ENCODE measurements at regions of chr2 and their contacts with region 1.

Region 1: GRCh38 chr2:70070541-70071268 is 16.6 kb upstream of the PCBP1 start:
- DNase-seq: peak; percentile 78
- ATAC-seq: peak; percentile 100
- H3K4me3 ChIP-seq: no peak overlapping the region
- H3K27ac ChIP-seq: peak overlapping the region; percentile 67; the same call in 1 of the 2 replicates
- H3K4me1 ChIP-seq: 0 out of 2 replicates have a peak, but pooled peaks cover 4% of the 10 kb centered on the region
- H3K27me3 ChIP-seq: no peaks in the 10 kb centered on the region
- CTCF ChIP-seq: peak; percentile 96

Region 2: GRCh38 chr2:69411120-69411519 is 659.6 kb before region 1 on chr2:
- CTCF ChIA-PET with region 1: no interaction called
- POLR2A ChIA-PET with region 1: no interaction called
- in situ Hi-C with region 1: no loop called
- intact Hi-C with region 1: no loop called
- DNase-seq: no peak
- ATAC-seq: no peak
- H3K4me3 ChIP-seq: no peak overlapping the region
- H3K27ac ChIP-seq: no peak overlapping the region
- H3K4me1 ChIP-seq: no peaks in the 10 kb centered on the region
- H3K27me3 ChIP-seq: no peaks in the 10 kb centered on the region
- CTCF ChIP-seq: no peak

Region 3: GRCh38 chr2:69914170-69914960 is 156.3 kb before region 1 on chr2:
- CTCF ChIA-PET with region 1: interaction called, 21 read pairs
- POLR2A ChIA-PET with region 1: interaction called, 8 read pairs
- in situ Hi-C with region 1: no loop called
- intact Hi-C with region 1: loop called (anchors 5 kb)
- DNase-seq: peak; percentile 100
- ATAC-seq: peak; percentile 93
- H3K4me3 ChIP-seq: peak overlapping the region; percentile 73 to 80
- H3K27ac ChIP-seq: peak overlapping the region; percentile 89
- H3K4me1 ChIP-seq: peaks cover 20% of the 10 kb centered on the region
- H3K27me3 ChIP-seq: no peaks in the 10 kb centered on the region
- CTCF ChIP-seq: peak; percentile 47; the same call in 1 of the 2 replicates

Region 4: GRCh38 chr2:70007141-70007540 is 63.6 kb before region 1 on chr2:
- CTCF ChIA-PET with region 1: no interaction called
- POLR2A ChIA-PET with region 1: interaction called, 11 read pairs
- in situ Hi-C with region 1: no loop called
- intact Hi-C with region 1: no loop called
- DNase-seq: no peak
- ATAC-seq: no peak
- H3K4me3 ChIP-seq: no peak overlapping the region
- H3K27ac ChIP-seq: no peak overlapping the region
- H3K4me1 ChIP-seq: no peaks in the 10 kb centered on the region
- H3K27me3 ChIP-seq: no peaks in the 10 kb centered on the region
- CTCF ChIP-seq: no peak

Region 5: DNA sequence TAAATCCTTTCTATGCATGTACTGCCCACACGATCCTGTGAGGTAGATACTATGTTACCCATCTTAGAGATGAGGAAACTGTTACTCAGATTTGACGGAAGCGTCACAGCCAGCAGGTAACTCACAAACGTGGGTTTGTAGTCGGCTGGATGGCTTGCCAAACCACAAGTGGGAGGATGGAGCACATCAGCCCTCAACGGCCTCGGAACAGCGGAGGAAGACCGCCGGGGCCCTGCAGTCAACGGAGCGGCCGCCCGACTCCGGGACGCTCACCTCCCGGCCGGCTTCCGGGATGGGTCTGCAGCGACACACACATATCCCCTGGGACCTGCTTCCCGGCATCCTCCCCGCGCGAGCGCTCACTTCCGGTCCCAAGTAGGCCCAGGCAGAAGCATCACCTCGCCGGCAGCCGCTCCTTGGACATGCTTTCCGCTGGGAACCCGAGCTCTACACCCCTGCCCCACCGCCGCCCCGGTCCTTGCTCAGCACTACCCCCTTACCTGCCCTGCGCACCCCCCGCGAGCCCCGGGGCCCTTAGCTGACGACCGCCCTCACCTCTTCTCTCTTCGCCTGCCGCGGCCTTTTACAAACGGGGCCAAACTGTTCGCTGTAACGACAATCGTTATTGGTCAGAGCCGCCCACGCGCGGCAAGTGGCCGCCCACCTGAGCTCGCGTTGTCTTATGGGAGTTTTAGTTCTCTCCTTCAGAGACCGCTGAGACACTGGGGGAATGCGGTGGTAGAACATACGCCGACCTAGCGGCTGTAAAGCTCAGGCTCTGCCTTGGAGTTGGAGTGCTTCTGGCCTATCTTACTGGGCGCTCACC is 119.9 kb after region 1 on chr2 and contains the start of gene C2orf42:
- CTCF ChIA-PET with region 1: interaction called, 3 read pairs
- POLR2A ChIA-PET with region 1: interaction called, 19 read pairs
- in situ Hi-C with region 1: no loop called
- intact Hi-C with region 1: no loop called
- DNase-seq: peak; percentile 94
- ATAC-seq: peak; percentile 98
- H3K4me3 ChIP-seq: peak within 1 kb of the TSS; percentile 62 to 79
- H3K27ac ChIP-seq: peak within 1 kb of the TSS; percentile 92
- H3K4me1 ChIP-seq: no peaks in the 10 kb centered on the region
- H3K27me3 ChIP-seq: no peaks in the 10 kb centered on the region
- CTCF ChIP-seq: no peak
- total RNA-seq, gene C2orf42: 15.4 TPM

Measured in Panc1 (cell line).